Ovary (tissue), 10 donors: ENCODE measurements at regions of chr18 and their contacts with region 1.

Region 1: GRCh38 chr18:741931-742512 is 29.6 kb upstream of the ENOSF1 start:
- DNase-seq: no peak
- H3K4me3 ChIP-seq: no peak overlapping the region
- H3K27ac ChIP-seq: no peak overlapping the region
- H3K4me1 ChIP-seq: no peaks in the 10 kb centered on the region
- H3K27me3 ChIP-seq: no peaks in the 10 kb centered on the region
- CTCF ChIP-seq: peak; percentile 34 to 70 (median 51)
- EP300 ChIP-seq: no peak
- POLR2A ChIP-seq: no peak

Region 2: GRCh38 chr18:830315-830901 is 88.4 kb after region 1 on chr18:
- intact Hi-C with region 1: loop called (anchors 5 to 10 kb)
- DNase-seq: no peak
- H3K4me3 ChIP-seq: no peak overlapping the region
- H3K27ac ChIP-seq: no peak overlapping the region
- H3K4me1 ChIP-seq: peaks cover 3% of the 10 kb centered on the region
- H3K27me3 ChIP-seq: no peaks in the 10 kb centered on the region
- CTCF ChIP-seq: no peak
- EP300 ChIP-seq: peak; percentile 6
- POLR2A ChIP-seq: no peak

Region 3: GRCh38 chr18:839224-840022 is 97.4 kb after region 1 on chr18:
- intact Hi-C with region 1: loop called (anchors 5 to 10 kb)
- DNase-seq: peak; percentile 75 to 91 (median 88)
- H3K4me3 ChIP-seq: no peak overlapping the region
- H3K27ac ChIP-seq: no peak overlapping the region
- H3K4me1 ChIP-seq: peaks cover 5% of the 10 kb centered on the region
- H3K27me3 ChIP-seq: no peaks in the 10 kb centered on the region
- CTCF ChIP-seq: peak; percentile 67 to 80 (median 78)
- EP300 ChIP-seq: no peak
- POLR2A ChIP-seq: no peak